Activated naive CD4-positive, alpha-beta T cell treated with anti-CD3 and anti-CD28 coated beads for 36 hours (primary cell): ENCODE measurements at regions of chr6 and their contacts with region 1.

Region 1: GRCh38 chr6:154247119-154247861 is 109.3 kb downstream of the IPCEF1 start:
- DNase-seq: peak; percentile 69
- H3K4me3 Mint-ChIP-seq: peak overlapping the region; percentile 87
- H3K27ac Mint-ChIP-seq: peak overlapping the region; percentile 98
- H3K4me1 Mint-ChIP-seq: peaks cover 68% of the 10 kb centered on the region
- H3K27me3 Mint-ChIP-seq: no peaks in the 10 kb centered on the region

Region 2: DNA sequence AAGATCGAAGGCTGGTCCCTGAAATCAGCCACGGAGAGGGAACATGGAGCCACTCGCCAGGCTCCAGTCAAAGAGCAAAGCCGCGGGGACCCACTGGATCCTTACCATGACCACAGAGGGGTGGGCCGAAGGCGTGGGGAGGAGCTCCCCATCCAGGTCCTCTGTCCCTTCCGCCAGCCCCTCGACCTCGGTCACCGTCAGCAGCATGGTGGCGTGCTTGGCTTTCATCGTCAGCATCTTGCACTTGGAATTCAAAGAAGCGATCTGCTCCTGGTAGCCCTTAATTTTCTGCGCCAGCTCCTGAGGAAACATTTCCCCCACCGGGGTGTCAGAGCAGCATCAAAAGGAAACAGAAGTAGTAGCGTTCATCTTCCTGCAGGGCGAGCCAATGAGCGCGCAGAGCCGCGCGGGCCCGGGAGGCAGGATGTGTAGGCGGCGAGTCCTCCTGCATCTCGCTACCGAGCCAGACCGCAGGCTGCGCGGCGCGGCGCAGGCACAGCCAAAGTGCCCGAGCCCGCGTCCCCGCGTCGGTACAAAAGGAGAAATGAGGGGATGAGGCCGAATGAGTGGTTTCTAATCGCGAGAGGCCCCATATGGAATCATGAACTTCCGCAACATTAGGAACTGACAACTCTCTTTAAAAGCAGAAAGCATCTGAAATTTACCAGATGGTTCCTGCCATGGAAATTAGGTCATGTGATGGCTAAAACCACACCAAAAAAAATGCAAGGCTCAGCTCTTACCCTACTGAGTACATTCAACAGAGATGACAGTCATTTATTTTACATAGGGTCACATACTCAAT is 1945.3 kb before region 1 on chr6:
- CTCF ChIA-PET with region 1: no interaction called
- intact Hi-C with region 1: loop called (anchors 10 kb)
- DNase-seq: peak; percentile 93
- H3K4me3 Mint-ChIP-seq: peak overlapping the region; percentile 100
- H3K27ac Mint-ChIP-seq: peak overlapping the region; percentile 96
- H3K4me1 Mint-ChIP-seq: peaks cover 30% of the 10 kb centered on the region
- H3K27me3 Mint-ChIP-seq: no peaks in the 10 kb centered on the region

Region 3: DNA sequence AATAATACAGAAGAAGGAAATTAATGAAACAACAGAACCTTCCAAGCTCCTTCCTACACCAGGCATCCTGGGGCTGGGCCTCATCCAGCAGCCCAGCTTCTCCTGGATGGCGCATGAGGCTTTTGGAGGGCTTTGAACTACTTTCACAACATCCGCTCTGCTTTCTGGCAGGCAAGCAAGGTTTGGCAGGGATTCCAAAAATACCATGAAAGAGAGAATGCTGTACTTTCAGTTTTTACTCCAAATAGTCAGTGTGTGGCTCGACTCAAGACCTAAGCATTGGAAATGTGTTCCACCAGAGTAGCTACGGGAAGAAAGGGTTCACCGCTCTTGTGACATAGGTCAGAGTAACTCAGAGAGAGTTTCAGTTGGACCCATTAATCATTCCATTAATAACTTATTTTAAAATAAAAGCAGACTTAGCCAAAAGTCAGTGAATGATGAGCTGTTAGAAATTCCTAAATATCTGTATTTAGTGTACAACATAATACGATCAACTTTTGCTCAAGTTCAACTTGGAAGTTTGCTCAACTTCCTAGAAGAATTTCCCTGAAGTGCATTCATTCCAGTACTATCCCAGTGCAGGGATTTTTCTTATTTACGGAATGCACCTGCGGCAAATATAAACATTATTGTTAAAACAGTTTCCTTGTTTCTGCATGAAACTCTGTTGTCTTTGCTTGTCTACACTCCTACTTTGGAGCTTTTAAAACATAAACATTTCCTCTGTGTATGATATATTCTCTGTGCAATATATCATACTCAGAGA is 82.7 kb before region 1 on chr6:
- CTCF ChIA-PET with region 1: interaction called, 13 read pairs
- intact Hi-C with region 1: no loop called
- DNase-seq: no peak
- H3K4me3 Mint-ChIP-seq: peak overlapping the region; percentile 23
- H3K27ac Mint-ChIP-seq: no peak overlapping the region
- H3K4me1 Mint-ChIP-seq: peaks cover 53% of the 10 kb centered on the region
- H3K27me3 Mint-ChIP-seq: no peaks in the 10 kb centered on the region

Region 4: GRCh38 chr6:154229786-154230185 is 17.5 kb before region 1 on chr6:
- CTCF ChIA-PET with region 1: interaction called, 19 read pairs
- intact Hi-C with region 1: loop called (anchors 1 kb)
- DNase-seq: peak; percentile 84
- H3K4me3 Mint-ChIP-seq: peak overlapping the region; percentile 66
- H3K27ac Mint-ChIP-seq: peak overlapping the region; percentile 86
- H3K4me1 Mint-ChIP-seq: peaks cover 81% of the 10 kb centered on the region
- H3K27me3 Mint-ChIP-seq: no peaks in the 10 kb centered on the region

Region 5: DNA sequence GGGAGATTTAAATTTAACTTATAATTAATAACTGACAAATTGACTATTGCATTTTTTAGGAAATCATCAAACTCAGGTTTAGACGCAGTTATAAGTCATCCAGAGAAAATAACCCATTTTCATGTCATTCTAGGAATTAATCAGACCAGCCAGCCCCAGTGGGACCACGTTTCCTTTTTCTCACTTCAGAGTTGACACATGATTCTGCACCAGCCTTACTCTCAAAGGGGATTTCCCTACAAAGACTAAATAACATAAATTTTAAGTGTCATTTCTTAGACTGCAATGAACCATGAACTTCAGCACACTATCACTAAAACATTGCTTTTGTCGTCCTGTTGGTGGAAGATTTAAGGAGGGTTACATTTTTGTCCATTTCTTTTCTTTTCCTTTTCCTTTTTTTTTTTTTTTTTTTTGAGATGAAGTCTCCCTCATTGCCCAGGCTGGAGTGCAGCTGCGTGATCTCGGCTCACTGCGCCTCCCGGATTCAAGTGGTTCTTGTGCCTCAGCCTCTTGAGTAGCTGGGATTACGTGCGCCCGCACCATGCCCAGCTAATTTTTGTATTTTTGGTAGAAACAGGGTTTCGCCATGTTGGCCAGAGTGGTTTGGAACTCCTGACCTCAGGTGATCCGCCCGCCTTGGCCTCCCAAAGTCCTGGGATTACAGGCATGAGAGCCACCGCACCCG is 105.8 kb after region 1 on chr6:
- CTCF ChIA-PET with region 1: interaction called, 6 read pairs
- intact Hi-C with region 1: loop called (anchors 1 kb)
- DNase-seq: peak; percentile 83
- H3K4me3 Mint-ChIP-seq: no peak overlapping the region
- H3K27ac Mint-ChIP-seq: no peak overlapping the region
- H3K4me1 Mint-ChIP-seq: peaks cover 38% of the 10 kb centered on the region
- H3K27me3 Mint-ChIP-seq: peaks cover 25% of the 10 kb centered on the region

Region 6: DNA sequence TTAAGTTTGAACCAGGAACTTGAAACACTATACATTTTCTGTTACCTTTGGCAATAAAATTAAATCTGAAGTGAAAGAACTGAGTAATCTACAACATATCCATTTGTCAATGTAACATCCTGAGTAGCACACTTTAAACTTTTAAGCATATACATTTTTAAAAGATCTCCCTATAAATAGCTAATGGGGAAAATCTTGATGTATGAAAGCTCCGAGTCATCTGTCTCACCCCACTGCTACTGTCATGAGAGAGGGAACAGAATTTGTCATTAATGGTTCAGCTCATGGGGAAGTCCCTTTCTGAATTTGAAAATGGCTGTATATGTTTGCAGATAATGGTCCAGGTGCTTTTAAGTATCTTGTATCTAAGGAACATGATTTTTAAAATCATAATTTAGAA is 1263.6 kb after region 1 on chr6:
- CTCF ChIA-PET with region 1: no interaction called
- intact Hi-C with region 1: loop called (anchors 10 kb)
- DNase-seq: peak; percentile 40
- H3K4me3 Mint-ChIP-seq: no peak overlapping the region
- H3K27ac Mint-ChIP-seq: peak overlapping the region; percentile 73
- H3K4me1 Mint-ChIP-seq: peaks cover 23% of the 10 kb centered on the region
- H3K27me3 Mint-ChIP-seq: no peaks in the 10 kb centered on the region